Uterus (tissue), 4 donors: ENCODE measurements at regions of chr7 and their contacts with region 1.

Region 1: GRCh38 chr7:150703209-150703608 is 13.2 kb upstream of the GIMAP1 start:
- DNase-seq: no peak
- H3K4me3 ChIP-seq: no peak overlapping the region
- H3K27ac ChIP-seq: no peak overlapping the region
- H3K4me1 ChIP-seq: no peaks in the 10 kb centered on the region
- H3K27me3 ChIP-seq: no peaks in the 10 kb centered on the region
- CTCF ChIP-seq: no peak
- POLR2A ChIP-seq: no peak

Region 2: GRCh38 chr7:150435390-150436073 is 267.7 kb before region 1 on chr7:
- intact Hi-C with region 1: no loop called
- DNase-seq: no peak
- H3K4me3 ChIP-seq: no peak overlapping the region
- H3K27ac ChIP-seq: no peak overlapping the region
- H3K4me1 ChIP-seq: no peaks in the 10 kb centered on the region
- H3K27me3 ChIP-seq: no peaks in the 10 kb centered on the region
- CTCF ChIP-seq: no peak
- POLR2A ChIP-seq: no peak

Region 3: GRCh38 chr7:150463461-150463860 is 239.7 kb before region 1 on chr7:
- intact Hi-C with region 1: loop called (anchors 5 kb)
- DNase-seq: no peak
- H3K4me3 ChIP-seq: no peak overlapping the region
- H3K27ac ChIP-seq: no peak overlapping the region
- H3K4me1 ChIP-seq: no peaks in the 10 kb centered on the region
- H3K27me3 ChIP-seq: no peaks in the 10 kb centered on the region
- CTCF ChIP-seq: no peak
- POLR2A ChIP-seq: no peak

Region 4: DNA sequence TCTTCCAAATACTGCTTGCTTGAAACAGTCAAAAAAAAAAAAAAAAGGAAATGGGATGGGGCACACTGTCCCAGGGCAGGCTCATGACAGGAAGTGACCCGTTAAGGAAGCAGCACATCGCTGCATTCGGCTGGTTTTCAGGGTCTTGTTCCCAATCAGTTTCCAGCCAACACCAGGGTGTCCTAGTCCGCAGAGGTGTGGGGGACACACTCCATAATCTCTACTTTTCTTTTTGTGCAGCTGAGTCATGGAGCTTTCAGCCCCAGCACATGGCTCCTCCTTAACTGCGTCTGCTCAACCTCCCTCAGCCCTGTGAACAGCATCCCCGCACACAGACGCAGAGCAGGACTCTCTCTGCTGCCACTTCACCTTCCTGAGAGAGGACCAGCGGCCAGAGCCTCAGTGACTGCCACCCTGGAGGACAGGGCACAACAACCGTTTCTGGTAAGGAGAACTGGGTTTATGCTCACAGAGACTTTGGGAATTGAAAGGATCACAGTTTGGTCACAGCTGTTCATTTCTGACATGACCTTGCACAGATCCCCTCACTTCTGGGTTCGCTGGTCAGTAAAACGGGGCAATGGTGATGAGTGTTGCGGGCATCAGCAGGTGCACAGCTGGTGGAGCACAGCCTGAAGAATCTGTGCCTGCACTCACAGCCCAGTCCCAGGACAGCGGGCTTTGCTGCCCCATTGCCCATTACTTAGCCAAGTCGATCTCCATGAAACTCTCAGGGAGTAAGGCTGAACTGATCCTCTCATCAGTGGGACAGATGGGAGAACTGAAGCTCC is 34.3 kb after region 1 on chr7 and contains the start of gene GIMAP5:
- intact Hi-C with region 1: no loop called
- DNase-seq: no peak
- H3K4me3 ChIP-seq: peak within 1 kb of the TSS; percentile 16 to 31
- H3K27ac ChIP-seq: peak within 1 kb of the TSS; percentile 69 to 72
- H3K4me1 ChIP-seq: no peaks in the 10 kb centered on the region
- H3K27me3 ChIP-seq: no peaks in the 10 kb centered on the region
- CTCF ChIP-seq: no peak
- POLR2A ChIP-seq: peak in 1 of 2 donors; percentile 51
- total RNA-seq, gene GIMAP5: 20.4 to 103 (median 31.9) TPM